ENCODE measurements at regions of chr7 and their contacts with region 1.

Region 1: GRCh38 chr7:36192053-36192824 is 39.2 kb downstream of the EEPD1 start:
- DNase-seq: peak; percentile 65
- H3K4me3 ChIP-seq: peak overlapping the region; percentile 56
- H3K27ac ChIP-seq: peak overlapping the region; percentile 96
- H3K4me1 ChIP-seq: peaks cover 73% of the 10 kb centered on the region
- CTCF ChIP-seq: 0 out of 2 replicates have a peak, but pooled peaks have one; percentile 29

Region 2: DNA sequence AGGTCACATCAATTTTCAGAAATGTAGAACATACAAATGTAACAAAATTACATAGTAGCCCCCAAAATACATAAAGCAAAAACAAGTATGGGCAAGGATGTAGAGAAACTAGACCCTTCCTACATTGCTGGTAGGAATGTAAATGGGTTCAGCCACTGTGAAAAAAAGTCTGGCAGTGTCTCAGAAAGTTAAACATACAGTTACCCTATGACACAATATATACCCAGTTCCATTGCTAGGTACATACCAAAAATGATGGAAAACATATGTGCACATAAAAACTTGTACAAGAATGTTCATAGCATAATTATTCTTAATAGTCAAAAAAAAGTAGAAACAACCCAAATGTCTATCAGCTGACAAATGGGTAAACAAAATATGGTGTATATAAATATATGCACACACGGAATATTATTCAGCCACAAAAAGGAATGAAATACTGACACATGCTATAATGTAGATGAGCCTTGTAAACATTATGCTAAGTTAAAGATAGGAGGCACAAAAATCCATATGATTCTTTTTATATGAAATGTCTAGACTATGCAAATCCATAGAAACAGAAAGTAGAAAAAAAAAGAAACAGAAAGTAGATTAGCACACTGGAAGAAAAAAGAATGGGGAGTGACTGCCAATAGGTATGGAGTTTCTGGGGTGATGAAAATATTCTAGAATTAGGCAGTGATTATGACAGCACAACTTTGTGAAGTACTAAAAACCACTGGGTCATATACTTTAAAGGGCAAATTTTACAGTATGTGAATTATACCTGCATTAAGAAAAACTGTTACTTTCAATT is 510.8 kb before region 1 on chr7:
- CTCF ChIA-PET with region 1: no interaction called
- POLR2A ChIA-PET with region 1: no interaction called
- intact Hi-C with region 1: no loop called
- DNase-seq: no peak
- H3K4me3 ChIP-seq: no peak overlapping the region
- H3K27ac ChIP-seq: no peak overlapping the region
- H3K4me1 ChIP-seq: peaks cover 14% of the 10 kb centered on the region
- CTCF ChIP-seq: no peak

Region 3: DNA sequence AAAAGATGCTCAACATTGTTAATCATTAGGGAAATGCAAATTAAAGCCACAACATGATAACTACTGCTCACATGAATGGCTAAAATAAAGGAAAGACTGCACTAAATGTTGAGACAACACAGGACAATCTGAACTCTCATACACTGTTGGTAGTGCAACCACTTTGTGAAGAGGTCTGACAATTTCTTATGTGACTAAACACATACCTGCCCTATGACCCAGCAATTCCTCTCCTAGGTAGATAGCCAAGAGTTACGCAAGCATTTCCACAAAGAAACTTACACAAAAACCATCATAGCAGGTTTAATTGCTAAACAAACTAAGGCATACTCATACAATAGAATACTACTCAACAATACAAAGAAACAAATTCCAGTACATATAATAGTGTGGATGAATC is 455.5 kb before region 1 on chr7:
- CTCF ChIA-PET with region 1: no interaction called
- POLR2A ChIA-PET with region 1: no interaction called
- intact Hi-C with region 1: loop called (anchors 5 kb)
- DNase-seq: no peak
- H3K4me3 ChIP-seq: no peak overlapping the region
- H3K27ac ChIP-seq: no peak overlapping the region
- H3K4me1 ChIP-seq: peaks cover 47% of the 10 kb centered on the region
- CTCF ChIP-seq: no peak

Region 4: GRCh38 chr7:35906191-35906908 is 285.9 kb before region 1 on chr7:
- CTCF ChIA-PET with region 1: no interaction called
- POLR2A ChIA-PET with region 1: no interaction called
- intact Hi-C with region 1: no loop called
- DNase-seq: peak; percentile 82
- H3K4me3 ChIP-seq: no peak overlapping the region
- H3K27ac ChIP-seq: no peak overlapping the region
- H3K4me1 ChIP-seq: peaks cover 3% of the 10 kb centered on the region
- CTCF ChIP-seq: peak; percentile 97

Region 5: GRCh38 chr7:35985126-35985754 is 207.0 kb before region 1 on chr7:
- CTCF ChIA-PET with region 1: no interaction called
- POLR2A ChIA-PET with region 1: no interaction called
- intact Hi-C with region 1: loop called (anchors 5 kb)
- DNase-seq: peak; percentile 76
- H3K4me3 ChIP-seq: no peak overlapping the region
- H3K27ac ChIP-seq: no peak overlapping the region
- H3K4me1 ChIP-seq: no peaks in the 10 kb centered on the region
- CTCF ChIP-seq: peak; percentile 93

Region 6: DNA sequence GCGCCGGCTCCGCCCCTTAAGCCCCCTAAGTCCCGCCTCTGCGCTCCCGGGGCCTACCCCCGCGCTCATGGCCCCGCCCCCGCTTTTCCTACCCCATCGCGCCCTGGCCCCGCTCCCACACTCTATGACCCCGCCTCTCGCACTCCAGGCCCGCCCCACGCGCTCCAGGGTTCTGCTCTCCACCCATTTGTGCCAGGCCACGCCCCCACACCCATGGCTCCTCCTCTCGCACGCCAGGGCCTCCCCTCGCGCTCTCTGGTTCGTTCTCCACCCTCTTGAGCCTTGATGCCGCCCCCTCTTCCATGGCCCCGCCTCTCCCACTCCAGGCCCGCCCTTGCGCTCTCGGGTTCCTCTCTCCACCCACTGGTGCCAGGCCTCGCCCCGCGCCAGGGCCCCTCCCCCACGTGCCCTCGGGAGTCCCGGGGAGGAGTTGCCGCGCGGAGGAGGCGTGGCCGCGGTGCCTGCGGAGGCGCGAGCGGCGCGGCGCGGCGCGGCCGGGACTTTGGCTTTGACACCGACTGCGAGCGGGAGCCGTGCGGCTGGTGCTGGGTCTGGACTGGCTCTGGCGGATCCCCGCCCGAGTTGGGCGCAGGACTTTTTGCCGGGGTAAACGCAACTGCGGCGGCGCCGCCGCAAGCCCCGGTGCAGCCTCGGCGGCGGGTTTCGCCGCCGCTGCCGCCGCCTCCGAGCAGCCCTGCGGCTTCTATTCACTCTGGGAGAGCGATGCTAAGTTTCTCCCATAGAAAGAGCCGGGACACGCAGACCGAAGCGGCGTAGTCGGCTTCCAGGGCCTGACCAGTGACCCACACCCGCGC is 39.3 kb before region 1 on chr7 and contains the start of gene EEPD1:
- CTCF ChIA-PET with region 1: no interaction called
- POLR2A ChIA-PET with region 1: no interaction called
- intact Hi-C with region 1: loop called (anchors 2 kb)
- DNase-seq: peak; percentile 97
- H3K4me3 ChIP-seq: peak within 1 kb of the TSS; percentile 76
- H3K27ac ChIP-seq: no peak within 1 kb of the TSS
- H3K4me1 ChIP-seq: peaks cover 25% of the 10 kb centered on the region
- CTCF ChIP-seq: no peak
- total RNA-seq, gene EEPD1: 1.7 and 5.1 TPM in 2 replicates

Region 7: GRCh38 chr7:36165059-36165458 is 27.2 kb before region 1 on chr7:
- CTCF ChIA-PET with region 1: interaction called, 4 read pairs
- POLR2A ChIA-PET with region 1: interaction called, 10 read pairs
- intact Hi-C with region 1: no loop called
- DNase-seq: no peak
- H3K4me3 ChIP-seq: no peak overlapping the region
- H3K27ac ChIP-seq: no peak overlapping the region
- H3K4me1 ChIP-seq: no peaks in the 10 kb centered on the region
- CTCF ChIP-seq: no peak

Region 8: GRCh38 chr7:36180121-36180520 is 12.1 kb before region 1 on chr7:
- CTCF ChIA-PET with region 1: no interaction called
- POLR2A ChIA-PET with region 1: interaction called, 14 read pairs
- intact Hi-C with region 1: no loop called
- DNase-seq: no peak
- H3K4me3 ChIP-seq: no peak overlapping the region
- H3K27ac ChIP-seq: no peak overlapping the region
- H3K4me1 ChIP-seq: peaks cover 19% of the 10 kb centered on the region
- CTCF ChIP-seq: no peak

Region 9: GRCh38 chr7:36286226-36286625 is 94.0 kb after region 1 on chr7:
- CTCF ChIA-PET with region 1: interaction called, 5 read pairs
- POLR2A ChIA-PET with region 1: interaction called, 24 read pairs
- intact Hi-C with region 1: loop called (anchors 1 kb)
- DNase-seq: peak; percentile 55
- H3K4me3 ChIP-seq: no peak overlapping the region
- H3K27ac ChIP-seq: peak overlapping the region; percentile 75
- H3K4me1 ChIP-seq: peaks cover 66% of the 10 kb centered on the region
- CTCF ChIP-seq: no peak

Region 10: DNA sequence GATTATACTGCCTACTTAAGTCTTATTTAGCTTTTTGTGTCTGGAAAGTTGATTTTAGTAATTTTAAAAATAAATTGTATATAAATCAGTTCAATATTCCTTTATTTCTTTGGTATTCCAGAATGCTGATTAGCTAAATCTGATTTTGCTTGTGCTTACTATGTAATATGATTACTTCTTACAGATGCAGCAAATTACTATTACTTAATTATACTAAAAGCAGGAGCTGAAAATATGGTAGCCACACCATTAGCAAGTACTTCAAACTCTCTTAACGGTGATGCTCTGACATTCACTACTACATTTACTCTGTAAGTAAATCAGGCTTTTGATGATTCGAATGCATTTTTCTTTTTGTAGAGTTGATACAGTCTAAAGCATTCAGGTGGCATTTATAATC is 231.4 kb after region 1 on chr7:
- CTCF ChIA-PET with region 1: no interaction called
- POLR2A ChIA-PET with region 1: no interaction called
- intact Hi-C with region 1: no loop called
- DNase-seq: no peak
- H3K4me3 ChIP-seq: no peak overlapping the region
- H3K27ac ChIP-seq: no peak overlapping the region
- H3K4me1 ChIP-seq: no peaks in the 10 kb centered on the region
- CTCF ChIP-seq: no peak